Sciatic nerve (tissue), 2 donors: ENCODE measurements at regions of chr12 and their contacts with region 1.

Region 1: DNA sequence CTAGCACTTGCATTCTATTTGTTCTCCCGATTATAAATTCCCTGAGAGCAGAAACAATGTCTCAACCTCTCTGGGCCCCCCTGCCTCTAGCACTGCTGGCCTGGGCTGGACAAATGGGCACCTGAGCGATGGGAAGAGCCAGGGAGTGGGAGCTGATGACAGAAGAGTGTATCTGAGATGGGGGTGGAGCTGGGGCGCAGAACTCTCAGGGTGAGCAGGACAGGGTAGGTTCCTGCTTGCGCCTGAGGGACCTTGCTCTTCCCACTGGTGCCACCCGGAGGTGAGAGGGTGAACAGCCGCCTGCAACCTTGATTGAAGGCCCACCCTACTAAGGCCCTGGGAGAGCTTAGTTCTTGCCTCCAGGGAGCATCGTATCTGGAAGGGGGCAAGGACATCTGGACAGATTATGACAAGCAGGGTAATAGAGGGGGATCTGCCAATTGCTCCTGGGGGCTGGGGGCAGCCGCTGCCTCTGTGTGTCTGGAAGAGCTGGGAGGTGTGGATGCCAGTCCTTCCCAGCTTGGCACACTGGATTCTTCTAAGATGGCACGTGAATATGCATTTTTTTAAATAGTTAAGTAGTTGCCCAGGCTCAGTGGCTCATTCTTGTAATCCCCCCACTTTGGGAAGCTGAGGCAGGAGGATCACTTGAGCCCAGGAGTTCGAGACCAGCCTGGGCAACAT is 43.0 kb upstream of the TSPAN9 start:
- DNase-seq: peak; percentile 76
- ATAC-seq: peak; percentile 53

Region 2: GRCh38 chr12:2853626-2854025 is 180.6 kb before region 1 on chr12:
- intact Hi-C with region 1: loop called (anchors 10 kb)
- DNase-seq: peak; percentile 91
- ATAC-seq: peak; percentile 84

Region 3: GRCh38 chr12:3168223-3169221 is 134.3 kb after region 1 on chr12:
- intact Hi-C with region 1: no loop called
- DNase-seq: no peak
- ATAC-seq: peak; percentile 31